ENCODE measurements at regions of chrX and their contacts with region 1.

Region 1: DNA sequence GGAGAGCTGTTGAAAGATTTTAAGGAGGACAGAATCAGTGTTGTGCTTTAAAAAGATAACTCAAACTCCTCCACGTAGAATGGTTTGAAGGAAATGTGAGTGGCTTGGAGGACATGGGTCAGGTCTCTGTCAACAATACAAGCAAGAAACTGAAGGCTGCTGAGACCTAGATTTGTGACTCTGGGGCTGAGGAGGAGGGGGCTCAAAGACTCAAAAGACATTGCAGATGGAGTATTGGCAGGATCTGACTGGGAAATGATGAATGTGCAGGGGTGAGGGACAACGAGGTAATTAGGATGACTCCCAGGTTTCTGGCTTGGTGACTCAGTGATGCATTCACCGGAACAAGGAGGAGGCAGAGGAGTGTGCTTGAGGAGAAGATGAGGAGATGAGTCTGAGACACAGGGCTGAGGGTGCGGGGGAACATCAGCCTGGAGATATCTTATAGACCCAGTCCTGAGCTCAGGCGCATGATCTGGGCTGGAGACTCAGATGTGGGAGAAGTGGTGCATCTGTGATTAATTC is 3.3 kb upstream of the RPS4X start:
- DNase-seq: no peak
- H3K4me3 ChIP-seq: no peak overlapping the region
- CTCF ChIP-seq: no peak

Region 2: DNA sequence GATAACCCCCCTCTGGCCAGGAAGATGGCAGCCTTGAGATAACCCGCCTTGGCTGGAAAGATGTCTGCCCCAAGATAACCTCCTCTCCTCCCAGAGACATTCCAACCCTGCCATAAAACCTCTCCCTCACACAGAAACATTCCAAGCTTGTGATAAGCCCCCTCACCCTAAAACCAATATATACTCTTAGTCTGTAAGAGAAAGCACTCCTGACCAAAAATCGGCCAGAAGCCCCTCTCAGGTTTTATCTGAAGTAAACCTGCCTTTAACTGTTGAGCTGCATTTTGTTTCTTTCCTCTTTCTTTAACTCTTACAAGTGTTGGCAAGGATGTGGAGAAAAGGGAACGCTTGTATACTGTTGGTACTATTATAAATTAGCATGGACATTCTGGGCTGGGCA is 50.1 kb before region 1 on chrX:
- in situ Hi-C with region 1: loop called (anchors 5 kb)
- DNase-seq: no peak
- H3K4me3 ChIP-seq: no peak overlapping the region
- CTCF ChIP-seq: no peak

Region 3: GRCh38 chrX:72309297-72310071 is 29.1 kb after region 1 on chrX:
- in situ Hi-C with region 1: no loop called
- DNase-seq: no peak
- H3K4me3 ChIP-seq: peak overlapping the region; percentile 25
- CTCF ChIP-seq: no peak